AG04450 (cell line): ENCODE measurements at regions of chr20 and their contacts with region 1.

Region 1: DNA sequence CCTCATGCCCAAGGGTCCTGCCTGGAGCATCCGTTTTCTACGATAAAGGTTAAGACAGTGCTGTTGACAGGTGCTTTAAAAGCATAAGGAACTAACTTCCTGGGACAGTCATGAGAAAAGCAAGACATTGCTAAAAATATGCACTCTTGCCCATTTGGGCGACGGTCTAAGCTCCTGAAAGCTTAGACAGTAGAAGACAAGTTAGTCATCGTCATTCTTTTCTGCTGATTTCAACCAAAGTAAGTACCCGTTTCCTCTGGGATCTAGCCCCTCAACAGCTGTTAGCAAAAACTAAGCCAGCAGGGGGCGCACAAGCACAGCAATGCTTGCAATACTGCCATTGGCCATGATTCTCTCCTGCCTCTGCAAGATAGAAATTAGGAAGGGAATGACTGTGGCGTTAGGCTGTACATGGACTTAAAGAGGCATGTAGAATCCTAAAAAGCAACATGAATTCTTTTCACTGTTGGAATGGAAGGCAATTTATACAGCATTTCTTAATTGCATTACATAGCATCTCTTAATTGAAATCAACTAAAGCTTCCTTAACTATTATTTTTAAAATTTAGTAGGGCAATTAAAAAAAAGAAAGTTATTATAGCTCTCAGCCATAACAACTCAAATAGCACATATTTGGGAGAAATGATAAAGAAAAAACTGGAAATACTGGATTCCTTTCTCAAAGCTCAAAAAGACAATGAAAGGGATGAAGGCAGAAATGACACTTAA is 147.8 kb upstream of the RALGAPA2 start:
- DNase-seq: peak; percentile 36
- H3K4me3 ChIP-seq: no peak overlapping the region
- H3K27ac ChIP-seq: no peak overlapping the region
- H3K27me3 ChIP-seq: no peaks in the 10 kb centered on the region
- CTCF ChIP-seq: peak; percentile 84

Region 2: DNA sequence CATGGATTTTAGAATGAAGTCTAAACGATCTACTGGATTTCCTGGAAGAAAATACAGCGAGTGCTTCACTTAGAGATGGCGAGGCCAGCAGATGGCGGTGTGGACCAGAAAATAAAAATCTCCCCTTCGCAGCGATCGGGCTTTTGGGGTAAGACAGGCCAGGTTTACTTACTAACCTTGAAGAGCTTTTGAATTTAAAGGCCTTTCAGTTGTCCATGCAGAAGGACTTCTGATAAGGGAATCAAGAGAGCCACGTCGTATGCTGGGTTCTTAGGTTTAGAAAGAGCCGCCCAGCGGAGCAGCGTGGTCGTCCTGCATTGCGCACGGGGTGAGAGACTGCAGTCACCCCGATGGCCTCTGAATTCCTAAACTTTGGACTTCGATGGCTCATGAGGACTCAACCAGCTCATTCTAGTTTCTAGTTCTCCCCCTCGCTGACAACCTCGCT is 22.6 kb before region 1 on chr20:
- CTCF ChIA-PET with region 1: interaction called, 29 read pairs
- POLR2A ChIA-PET with region 1: no interaction called
- DNase-seq: peak; percentile 11
- H3K4me3 ChIP-seq: no peak overlapping the region
- H3K27ac ChIP-seq: no peak overlapping the region
- H3K27me3 ChIP-seq: no peaks in the 10 kb centered on the region
- CTCF ChIP-seq: peak; percentile 67

Region 3: DNA sequence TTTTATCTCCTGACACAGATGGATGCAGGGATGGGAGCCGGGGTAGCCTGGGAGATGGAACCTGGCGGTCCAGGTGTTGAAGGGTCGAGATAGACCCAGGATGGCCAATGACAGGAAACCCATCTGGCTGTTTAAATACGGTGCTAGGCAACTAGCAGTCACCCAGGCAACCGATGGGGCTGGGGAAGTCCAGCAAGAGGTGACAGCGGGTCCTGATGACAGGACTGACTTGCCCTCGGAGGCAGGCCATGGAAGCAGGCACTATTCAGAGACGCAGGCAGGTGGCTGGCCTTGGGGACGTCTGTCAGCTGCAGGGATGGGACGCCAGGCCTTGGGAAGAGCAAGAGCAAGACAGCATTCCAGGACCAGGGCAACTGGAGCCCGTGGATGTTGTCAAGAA is 12.4 kb before region 1 on chr20:
- CTCF ChIA-PET with region 1: interaction called, 12 read pairs
- POLR2A ChIA-PET with region 1: no interaction called
- DNase-seq: no peak
- H3K4me3 ChIP-seq: no peak overlapping the region
- H3K27ac ChIP-seq: no peak overlapping the region
- H3K27me3 ChIP-seq: no peaks in the 10 kb centered on the region
- CTCF ChIP-seq: no peak

Region 4: DNA sequence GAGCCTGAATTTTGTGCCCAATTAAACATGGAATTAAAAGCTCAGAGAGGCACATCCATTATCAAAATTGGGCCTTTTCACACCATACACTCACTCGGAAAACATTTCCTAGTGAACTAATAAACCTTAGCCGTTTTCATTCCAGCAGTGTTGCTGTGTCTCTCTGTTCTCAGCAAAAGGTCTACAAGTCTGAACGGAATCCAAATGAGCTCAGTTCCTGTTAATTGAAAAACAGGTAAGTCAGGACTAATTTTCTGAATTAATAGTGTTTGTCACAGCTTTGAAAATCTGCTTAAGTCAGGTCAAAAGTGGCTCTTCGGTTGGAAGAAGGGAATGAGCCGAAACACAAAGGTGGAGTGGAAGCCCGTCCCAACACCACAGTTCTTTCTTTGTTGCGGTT is 15.5 kb after region 1 on chr20:
- CTCF ChIA-PET with region 1: interaction called, 16 read pairs
- POLR2A ChIA-PET with region 1: no interaction called
- DNase-seq: no peak
- H3K4me3 ChIP-seq: no peak overlapping the region
- H3K27ac ChIP-seq: no peak overlapping the region
- H3K27me3 ChIP-seq: no peaks in the 10 kb centered on the region
- CTCF ChIP-seq: no peak

Region 5: GRCh38 chr20:20933142-20933958 is 73.1 kb after region 1 on chr20:
- CTCF ChIA-PET with region 1: no interaction called
- POLR2A ChIA-PET with region 1: no interaction called
- DNase-seq: no peak
- H3K4me3 ChIP-seq: no peak overlapping the region
- H3K27ac ChIP-seq: no peak overlapping the region
- H3K27me3 ChIP-seq: no peaks in the 10 kb centered on the region
- CTCF ChIP-seq: no peak

Region 6: DNA sequence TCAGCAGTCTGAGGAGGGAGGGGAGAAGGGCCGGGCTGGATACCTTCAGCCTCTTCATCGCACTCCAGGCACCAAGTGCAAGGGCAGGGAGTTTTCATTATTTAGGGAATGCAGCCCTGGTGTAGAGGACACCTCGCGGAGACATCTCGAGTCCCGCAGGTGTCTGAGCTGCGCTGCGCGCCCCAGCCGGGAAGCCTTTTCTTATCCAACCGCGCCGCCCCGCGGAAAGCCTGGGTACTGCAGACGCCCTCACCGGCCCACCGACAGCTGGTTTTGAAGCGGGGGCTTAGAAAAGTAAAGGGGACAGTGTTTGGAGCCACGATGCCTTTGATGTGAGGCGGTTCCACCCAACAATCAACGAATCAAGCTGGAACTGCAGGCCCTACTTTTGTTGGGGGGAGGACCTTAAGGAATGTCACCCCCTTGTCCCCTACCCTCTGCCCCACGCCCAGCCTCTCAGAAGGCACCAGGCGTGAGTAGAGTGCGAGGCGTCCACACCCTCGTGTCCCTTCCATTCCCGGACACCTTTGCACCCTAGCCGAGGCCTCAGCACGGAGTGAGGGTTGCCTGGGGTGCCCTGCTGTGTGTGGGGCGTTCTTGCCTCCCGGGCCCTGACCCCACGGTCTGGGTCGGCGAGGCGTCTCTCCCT is 645.0 kb after region 1 on chr20:
- CTCF ChIA-PET with region 1: interaction called, 88 read pairs
- POLR2A ChIA-PET with region 1: no interaction called
- DNase-seq: no peak
- H3K4me3 ChIP-seq: peak overlapping the region; percentile 48; the same call in 1 of the 2 replicates
- H3K27ac ChIP-seq: no peak overlapping the region
- H3K27me3 ChIP-seq: peaks cover 45% of the 10 kb centered on the region
- CTCF ChIP-seq: peak; percentile 97

Region 7: DNA sequence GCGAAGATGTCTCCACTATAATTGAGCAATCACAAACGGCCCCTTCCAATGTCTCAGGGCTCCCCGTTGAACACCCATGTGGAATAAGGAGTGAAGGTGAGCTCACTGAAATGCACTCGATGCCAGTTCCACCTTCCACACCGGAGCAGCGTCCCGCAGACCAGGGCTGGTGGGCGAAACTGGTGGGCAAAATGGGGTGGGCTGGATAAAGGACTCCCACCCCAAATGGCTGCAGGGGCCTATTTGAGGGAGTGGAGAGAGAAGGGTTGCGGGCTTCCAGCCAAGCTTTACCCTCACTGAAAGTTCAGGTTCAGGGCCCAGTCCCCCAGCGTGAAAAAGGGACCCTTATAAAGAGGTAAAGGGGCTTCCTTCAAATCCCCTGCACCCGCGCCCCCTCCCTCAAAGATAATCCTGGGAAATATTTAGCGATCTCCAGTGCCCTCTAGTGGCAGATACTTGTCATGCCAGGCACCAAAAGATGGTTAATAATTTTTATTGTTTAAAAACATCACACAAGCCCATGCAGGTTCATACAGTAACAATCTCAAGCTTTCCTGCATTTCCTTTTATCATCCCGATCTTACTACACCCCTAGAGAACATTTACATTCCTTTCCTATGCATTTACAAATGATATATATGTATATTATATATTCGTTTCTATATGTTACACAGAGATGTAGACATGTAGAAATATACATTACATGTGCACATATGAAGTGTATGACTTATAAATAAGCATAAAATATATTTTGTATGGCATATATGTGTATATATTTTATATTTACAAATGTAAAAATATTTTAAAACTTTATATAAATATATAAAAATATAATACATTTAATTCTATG is 711.8 kb after region 1 on chr20:
- CTCF ChIA-PET with region 1: interaction called, 27 read pairs
- POLR2A ChIA-PET with region 1: no interaction called
- DNase-seq: no peak
- H3K4me3 ChIP-seq: no peak overlapping the region
- H3K27ac ChIP-seq: no peak overlapping the region
- H3K27me3 ChIP-seq: no peaks in the 10 kb centered on the region
- CTCF ChIP-seq: peak; percentile 83